Breast epithelium (tissue), 4 donors: ENCODE measurements at regions of chr2 and their contacts with region 1.

Region 1: DNA sequence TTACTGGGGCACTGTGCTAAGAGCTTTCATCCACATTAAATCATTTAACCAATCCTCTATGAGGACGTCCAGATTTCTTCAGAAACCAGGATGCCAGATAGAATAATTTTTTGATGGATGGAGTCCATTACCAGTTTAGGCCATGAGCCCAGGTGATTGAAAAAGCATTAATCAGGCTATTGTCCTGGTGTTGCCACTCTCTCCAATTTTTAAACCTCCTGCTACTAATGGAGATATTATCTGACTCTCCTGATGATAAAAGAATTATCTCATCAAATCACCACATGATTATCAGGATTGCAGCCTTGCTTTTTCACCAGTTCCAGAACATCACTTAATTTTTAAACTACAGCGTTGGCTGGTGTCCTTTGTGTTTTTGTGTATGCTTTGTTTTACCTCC is 402.2 kb downstream of the CLIP4 start:
- DNase-seq: no peak
- H3K4me3 ChIP-seq: no peak overlapping the region
- H3K27ac ChIP-seq: no peak overlapping the region
- H3K4me1 ChIP-seq: no peaks in the 10 kb centered on the region
- H3K27me3 ChIP-seq: no peaks in the 10 kb centered on the region
- CTCF ChIP-seq: no peak
- POLR2A ChIP-seq: no peak

Region 2: GRCh38 chr2:29463181-29463900 is 54.1 kb before region 1 on chr2:
- intact Hi-C with region 1: no loop called
- DNase-seq: no peak
- H3K4me3 ChIP-seq: no peak overlapping the region
- H3K27ac ChIP-seq: no peak overlapping the region
- H3K4me1 ChIP-seq: no peaks in the 10 kb centered on the region
- H3K27me3 ChIP-seq: no peaks in the 10 kb centered on the region
- CTCF ChIP-seq: no peak
- POLR2A ChIP-seq: no peak

Region 3: DNA sequence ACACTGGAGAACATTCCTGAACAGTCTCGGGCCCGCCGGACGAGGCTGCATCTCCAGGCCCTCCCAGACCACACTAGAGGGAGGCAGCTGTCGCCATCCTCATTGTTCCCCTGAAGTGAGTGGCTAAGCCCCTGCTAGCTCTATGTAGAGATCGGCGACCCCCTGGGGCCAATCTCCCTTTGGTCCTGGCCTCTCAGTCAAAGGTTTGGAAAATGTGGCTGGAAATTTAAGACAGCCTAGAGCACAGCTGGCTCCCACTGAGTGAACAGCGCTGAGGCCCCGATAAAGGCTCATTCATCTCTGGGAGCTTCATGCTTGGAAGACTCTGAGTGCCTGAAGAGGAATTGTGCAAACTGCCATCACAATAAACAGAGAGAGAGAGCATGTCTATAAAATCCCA is 41.9 kb before region 1 on chr2:
- intact Hi-C with region 1: loop called (anchors 2 kb)
- DNase-seq: no peak
- H3K4me3 ChIP-seq: no peak overlapping the region
- H3K27ac ChIP-seq: no peak overlapping the region
- H3K4me1 ChIP-seq: no peaks in the 10 kb centered on the region
- H3K27me3 ChIP-seq: no peaks in the 10 kb centered on the region
- CTCF ChIP-seq: no peak
- POLR2A ChIP-seq: no peak